AG04449 (cell line): ENCODE measurements at regions of chr16 and their contacts with region 1.

Region 1: DNA sequence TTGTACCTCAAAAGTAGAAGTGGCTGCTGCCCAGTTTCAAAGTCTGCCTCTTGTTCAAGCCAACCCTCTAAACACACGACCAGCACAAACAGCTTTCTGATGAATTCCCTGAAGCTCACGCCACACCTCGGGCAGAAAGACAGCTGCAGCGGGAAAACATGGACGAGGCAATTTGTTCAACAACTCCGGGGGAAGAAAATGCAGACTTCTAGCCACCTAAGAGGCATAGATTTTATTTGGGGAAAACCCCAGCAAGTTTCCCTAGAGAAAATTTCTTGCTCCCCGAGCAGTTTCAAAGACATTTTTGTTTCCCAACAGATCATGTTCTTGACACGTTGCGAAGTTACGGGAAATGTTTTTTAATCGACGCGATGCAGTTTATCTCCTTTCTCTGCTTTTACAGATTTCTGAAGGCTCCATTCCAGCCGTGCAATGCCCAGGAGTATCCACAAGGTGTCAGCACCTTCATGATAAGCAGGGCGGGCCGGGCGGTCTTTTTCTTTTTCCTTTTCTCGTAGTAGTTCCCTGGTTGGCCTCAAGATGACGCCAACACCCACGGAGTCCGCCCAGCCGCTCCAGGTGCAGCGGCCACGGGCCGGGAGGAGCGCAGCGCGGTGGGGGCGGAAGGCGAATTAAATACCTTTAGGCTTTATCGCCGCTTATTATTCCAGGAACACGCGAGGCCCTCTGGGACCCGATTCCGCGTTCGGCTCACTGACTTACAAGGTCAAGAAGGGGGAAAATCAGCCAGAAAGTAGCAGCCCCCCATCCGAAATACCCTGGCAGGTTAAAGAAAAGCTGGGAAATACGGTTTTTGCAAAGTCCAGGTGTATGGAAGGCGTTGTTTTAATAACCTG is 2.9 kb upstream of the FOXC2 start:
- DNase-seq: no peak
- H3K4me3 ChIP-seq: peak overlapping the region; percentile 57
- CTCF ChIP-seq: peak; percentile 86

Region 2: GRCh38 chr16:86595983-86596605 is 32.4 kb after region 1 on chr16:
- CTCF ChIA-PET with region 1: no interaction called
- POLR2A ChIA-PET with region 1: no interaction called
- DNase-seq: no peak
- H3K4me3 ChIP-seq: no peak overlapping the region
- CTCF ChIP-seq: no peak

Region 3: DNA sequence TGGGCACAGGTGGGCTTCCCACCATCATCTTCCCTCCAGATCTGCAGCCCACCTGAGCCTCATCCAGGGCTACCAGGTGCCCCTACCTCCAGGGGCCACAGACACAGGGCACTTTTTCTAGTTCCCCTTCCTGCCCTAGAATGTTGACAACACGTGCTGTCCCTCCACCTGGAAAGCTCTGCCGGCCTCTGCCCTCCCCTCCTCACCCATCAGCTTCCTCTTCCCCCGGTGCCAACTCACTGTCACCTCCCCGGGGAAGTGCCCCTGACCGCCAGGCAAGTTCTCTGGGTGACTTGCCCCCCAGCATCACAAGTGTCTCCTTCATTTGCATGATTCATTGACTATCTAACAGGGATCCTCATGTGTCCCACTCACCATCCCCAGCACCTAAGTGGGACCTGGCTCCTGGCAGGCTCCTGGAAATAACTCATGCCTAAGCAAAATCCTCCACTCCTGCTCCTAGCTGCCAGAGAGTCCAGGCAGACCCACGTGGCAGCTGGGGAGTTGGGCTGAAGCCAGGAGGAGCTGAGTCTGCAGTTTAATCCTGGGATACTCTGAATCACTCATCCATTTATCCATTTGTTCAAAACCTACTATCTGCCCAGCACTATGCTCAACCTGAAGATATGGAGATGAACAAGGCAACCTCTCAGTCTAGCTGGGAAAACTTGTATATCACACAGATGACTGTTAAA is 319.0 kb after region 1 on chr16:
- CTCF ChIA-PET with region 1: interaction called, 15 read pairs
- POLR2A ChIA-PET with region 1: no interaction called
- DNase-seq: no peak
- H3K4me3 ChIP-seq: no peak overlapping the region
- CTCF ChIP-seq: no peak

Region 4: DNA sequence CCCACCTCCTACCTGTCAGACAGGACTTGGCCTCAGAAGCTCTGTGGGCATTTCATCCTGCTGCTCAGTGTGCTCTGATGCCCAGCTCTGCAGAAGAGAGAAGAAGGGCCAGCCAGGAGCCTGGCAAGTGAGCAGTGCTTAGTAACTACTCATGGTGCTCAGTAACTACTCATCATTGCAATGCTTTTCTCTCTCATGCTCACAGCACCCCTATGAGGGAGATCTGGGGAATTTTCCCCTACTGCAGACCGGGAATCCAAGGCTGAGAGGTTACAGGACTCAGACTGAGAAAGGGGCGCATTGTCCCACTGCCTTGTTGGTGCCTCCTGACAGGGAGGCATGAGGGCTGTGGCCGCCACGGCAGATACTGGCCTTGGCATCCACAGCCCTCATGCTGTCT is 492.4 kb after region 1 on chr16:
- CTCF ChIA-PET with region 1: interaction called, 309 read pairs
- POLR2A ChIA-PET with region 1: no interaction called
- DNase-seq: no peak
- H3K4me3 ChIP-seq: no peak overlapping the region
- CTCF ChIP-seq: peak; percentile 21

Region 5: DNA sequence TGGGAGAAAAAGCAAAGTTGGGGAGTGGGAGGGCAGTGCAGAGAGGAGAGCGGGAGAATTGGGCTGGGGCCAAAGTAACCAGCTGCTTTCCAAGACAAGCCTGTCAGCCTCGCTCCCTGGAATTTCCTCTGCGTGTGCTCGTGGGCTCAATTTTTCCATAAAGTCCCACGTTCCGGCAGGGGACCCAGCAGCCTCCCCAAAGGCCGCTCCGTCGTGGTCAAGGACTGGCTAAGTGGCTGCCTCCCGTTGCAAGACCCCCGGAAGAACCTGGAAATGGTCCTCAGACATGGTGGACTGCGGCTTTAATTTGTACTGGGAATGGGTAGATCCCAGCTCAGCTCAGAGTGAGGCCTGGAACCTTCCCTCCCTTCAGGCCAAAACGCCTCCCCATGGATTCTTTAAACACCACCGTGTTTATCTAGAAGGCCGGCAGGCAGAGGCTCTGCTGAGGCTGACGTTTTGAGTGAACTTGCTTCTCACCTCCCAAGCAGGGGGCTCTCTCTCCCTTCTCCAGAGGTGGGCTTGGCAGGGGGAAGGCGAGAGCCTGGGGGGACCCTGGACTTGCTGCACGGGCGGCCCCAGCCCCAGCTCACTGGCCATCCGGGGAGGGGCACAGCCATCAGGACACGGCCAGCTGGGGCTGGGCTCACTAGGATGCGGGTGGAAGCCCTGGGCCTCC is 563.5 kb after region 1 on chr16:
- CTCF ChIA-PET with region 1: interaction called, 11 read pairs
- POLR2A ChIA-PET with region 1: no interaction called
- DNase-seq: no peak
- H3K4me3 ChIP-seq: no peak overlapping the region
- CTCF ChIP-seq: no peak

Region 6: GRCh38 chr16:87278191-87279095 is 714.7 kb after region 1 on chr16:
- CTCF ChIA-PET with region 1: interaction called, 120 read pairs
- POLR2A ChIA-PET with region 1: no interaction called
- DNase-seq: peak; percentile 31
- H3K4me3 ChIP-seq: no peak overlapping the region
- CTCF ChIP-seq: peak; percentile 97